ENCODE measurements at regions of chr5 and their contacts with region 1.

Region 1: DNA sequence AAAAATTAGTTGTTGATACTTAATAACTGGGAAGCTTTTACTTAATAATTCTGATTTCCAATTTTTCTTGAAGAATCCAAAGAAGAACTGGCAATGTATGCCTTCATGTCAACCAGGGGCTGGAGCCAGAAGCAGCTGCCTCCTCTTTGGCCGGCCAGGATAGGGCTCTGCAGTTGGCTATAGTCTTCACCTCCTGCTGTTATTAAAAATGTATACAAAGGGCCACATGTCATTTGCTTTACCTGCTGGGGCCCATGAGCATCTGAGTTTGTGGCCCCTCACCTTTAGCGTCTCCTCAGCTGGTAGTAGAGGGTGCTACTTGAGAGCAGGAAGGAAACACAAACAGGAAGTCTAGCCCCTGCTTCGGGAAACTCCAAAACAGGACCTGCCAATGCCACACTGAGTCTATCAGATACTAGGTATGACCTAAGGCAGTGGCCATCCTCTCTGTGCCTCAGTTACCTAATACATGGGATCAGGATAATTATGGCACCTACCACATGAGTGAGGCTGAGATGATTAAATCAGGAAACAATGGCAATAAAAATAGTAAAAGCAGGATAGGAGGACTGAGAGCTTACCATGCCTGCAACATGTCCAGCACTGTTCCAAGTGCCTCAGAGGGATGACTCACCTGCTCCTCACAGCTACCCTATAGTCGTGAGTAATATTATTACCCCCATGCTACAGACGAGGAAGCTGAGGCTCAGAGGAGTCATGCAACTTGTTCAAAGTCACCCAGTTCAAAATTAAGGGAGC is 21.3 kb downstream of the CCDC69 start:
- DNase-seq: peak; percentile 68
- ATAC-seq: peak; percentile 95
- H3K4me3 Mint-ChIP-seq: no peak overlapping the region
- H3K27ac Mint-ChIP-seq: peak overlapping the region; percentile 73
- H3K4me1 Mint-ChIP-seq: peaks cover 27% of the 10 kb centered on the region
- H3K27me3 Mint-ChIP-seq: no peaks in the 10 kb centered on the region

Region 2: DNA sequence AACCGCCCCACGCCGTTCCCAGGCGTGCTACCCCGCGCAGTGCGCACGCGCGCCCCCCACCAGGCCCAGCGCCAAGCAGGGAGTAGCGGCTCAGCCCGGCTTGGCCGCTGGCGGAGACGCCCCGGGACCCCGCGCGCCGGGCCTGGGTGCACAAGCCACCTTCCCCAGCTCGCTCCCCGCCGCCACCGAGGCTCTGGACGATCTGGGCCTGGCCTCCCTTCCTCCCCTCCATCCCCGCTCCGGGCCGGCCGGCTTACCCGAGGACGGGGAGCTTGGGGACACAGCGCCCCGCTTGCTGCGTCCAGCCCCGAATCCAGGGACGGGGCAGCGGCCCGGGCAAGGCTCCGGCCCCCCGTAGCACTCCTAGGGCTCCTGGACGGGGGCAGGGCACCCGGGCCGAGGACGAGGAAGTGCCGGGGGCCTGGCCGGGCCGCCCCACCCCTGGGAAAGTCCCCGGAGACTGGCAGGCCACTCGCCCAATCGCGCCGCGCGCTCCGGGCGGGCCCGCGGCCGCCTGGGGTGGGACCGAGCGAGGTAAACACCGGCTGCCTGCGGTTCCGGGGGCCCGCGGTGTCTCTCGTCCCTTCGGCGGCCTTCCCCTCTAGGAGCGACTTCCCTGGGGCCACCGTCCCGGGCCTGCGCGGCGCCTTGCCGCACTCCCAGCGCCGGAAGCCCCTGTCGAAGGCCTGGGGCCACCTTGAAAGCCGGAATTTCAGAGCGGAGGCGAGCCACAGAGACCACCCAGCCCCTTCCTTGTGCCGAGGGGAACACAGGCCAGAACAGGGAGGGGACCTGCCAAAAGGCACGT is 121.7 kb before region 1 on chr5 and contains the start of gene TNIP1:
- CTCF ChIA-PET with region 1: no interaction called
- DNase-seq: peak; percentile 94
- ATAC-seq: peak; percentile 89
- H3K4me3 Mint-ChIP-seq: peak within 1 kb of the TSS; percentile 78
- H3K27ac Mint-ChIP-seq: peak within 1 kb of the TSS; percentile 78
- H3K4me1 Mint-ChIP-seq: peaks cover 78% of the 10 kb centered on the region
- H3K27me3 Mint-ChIP-seq: no peaks in the 10 kb centered on the region
- total RNA-seq, gene TNIP1: 136 to 201 TPM

Region 3: DNA sequence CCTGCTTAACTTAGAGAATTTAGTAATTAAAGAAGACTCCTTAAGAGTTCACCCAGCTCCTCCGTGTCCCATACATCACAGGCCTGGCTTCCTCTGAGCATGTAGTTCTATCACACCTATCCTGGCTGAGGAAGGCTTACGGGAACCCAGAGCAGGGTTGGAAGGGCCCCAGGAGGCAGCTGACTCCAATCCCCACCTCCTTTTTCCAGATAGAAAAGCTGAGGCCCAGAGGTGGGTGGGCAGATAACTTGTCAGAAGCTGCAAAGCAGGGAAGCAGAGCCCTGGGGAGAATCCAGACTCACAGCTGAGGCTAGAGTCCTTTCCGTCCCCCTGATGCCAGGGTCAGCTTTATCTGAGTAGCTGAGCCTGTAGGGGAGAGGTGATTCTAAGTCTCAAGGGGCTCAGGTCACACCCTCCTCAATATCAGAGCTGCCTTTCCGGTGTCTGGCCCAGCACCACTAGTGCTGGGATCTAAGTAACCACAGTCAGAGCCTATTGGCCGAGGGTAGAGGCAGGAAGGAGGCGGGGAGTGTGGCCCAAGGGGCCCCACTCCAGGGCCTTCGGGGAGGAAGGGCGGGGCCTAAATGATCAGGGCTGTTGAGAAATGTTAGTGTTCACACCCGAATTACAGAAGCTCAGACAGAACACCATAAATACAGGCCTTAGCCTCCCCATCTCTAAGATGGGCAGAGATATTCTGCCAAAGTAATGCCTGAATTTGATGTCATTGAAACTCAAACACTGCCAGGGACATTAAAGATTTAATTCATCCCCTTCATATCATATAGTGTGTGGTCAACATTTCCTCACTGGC is 11.4 kb after region 1 on chr5:
- CTCF ChIA-PET with region 1: interaction called, 21 read pairs
- DNase-seq: peak; percentile 96
- ATAC-seq: peak; percentile 86
- H3K4me3 Mint-ChIP-seq: peak overlapping the region; percentile 86
- H3K27ac Mint-ChIP-seq: peak overlapping the region; percentile 98
- H3K4me1 Mint-ChIP-seq: peaks cover 78% of the 10 kb centered on the region
- H3K27me3 Mint-ChIP-seq: no peaks in the 10 kb centered on the region

Measured in activated CD8-positive, alpha-beta memory T cell treated with anti-CD3 and anti-CD28 coated beads, Interleukin-2, amount 10 ng/mL, durations not matched to agents 7 days and 5 days (primary cell).